ENCODE measurements at regions of chr18 and their contacts with region 1.

Region 1: DNA sequence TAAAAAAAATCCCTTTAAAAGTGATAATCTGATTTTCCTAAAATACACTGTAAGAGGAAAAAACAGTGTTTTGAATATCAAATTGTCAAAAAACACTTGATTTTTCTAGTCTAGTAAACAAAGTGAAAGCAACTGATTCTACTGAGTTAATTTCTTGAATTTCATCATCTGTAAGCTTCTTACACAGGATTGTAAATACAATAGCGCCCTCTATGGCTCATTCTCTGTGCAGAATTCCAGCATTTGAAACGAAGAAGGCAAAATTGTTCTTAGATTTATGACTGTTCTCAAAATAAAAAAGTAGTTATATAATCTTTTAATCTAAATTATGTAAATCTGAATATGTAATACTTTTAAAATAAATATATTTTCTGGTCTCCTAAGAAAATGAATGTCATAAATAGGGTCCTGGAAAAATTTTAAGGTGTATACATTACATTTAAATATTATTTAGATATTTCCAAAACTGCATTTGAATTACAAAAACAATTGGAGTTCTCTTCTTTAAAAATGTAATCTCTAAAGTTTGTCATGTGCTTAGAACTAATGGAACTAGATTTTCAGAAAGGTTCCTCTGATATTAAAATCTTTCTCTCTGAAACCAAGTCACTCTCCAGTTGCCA is 176.9 kb upstream of the MC4R start:
- DNase-seq: no peak
- H3K4me3 ChIP-seq: no peak overlapping the region
- H3K27ac ChIP-seq: no peak overlapping the region
- H3K4me1 ChIP-seq: no peaks in the 10 kb centered on the region
- H3K27me3 ChIP-seq: peaks cover 0 to 6% (median 0%) of the 10 kb centered on the region in 4 donors
- CTCF ChIP-seq: peak; percentile 64 to 73 (median 70)
- EP300 ChIP-seq: no peak
- POLR2A ChIP-seq: no peak

Region 2: DNA sequence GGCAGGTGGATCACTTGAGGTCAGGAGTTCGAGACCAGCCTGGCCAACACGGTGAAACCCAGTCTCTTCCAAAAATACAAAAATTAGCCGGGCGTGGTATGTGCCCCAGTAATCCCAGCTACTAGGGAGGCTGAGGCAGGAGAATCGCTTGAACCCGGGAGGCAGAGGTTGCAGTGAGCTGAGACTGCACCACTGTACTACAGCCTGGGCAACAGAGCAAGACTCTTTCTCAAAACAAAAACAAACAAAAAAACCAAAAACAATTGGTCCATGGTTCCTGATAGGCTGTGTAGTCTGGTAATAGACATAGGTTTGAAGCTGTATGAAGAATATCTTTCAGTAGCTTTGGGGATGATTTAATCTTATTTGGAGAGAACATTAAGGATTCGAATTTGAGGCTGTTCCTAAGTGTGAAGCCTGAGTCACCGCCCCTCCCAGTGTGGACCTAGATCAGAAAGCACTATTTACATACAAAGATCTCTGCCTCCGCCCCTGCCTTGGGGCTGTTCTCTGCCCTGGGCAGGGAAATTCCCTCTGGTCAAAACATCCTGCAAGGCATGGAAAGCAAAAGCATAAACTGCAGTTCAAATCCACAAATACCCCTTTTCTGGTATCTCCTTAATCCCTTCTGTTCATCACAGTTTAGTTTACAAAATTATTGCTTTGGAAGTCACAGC is 702.5 kb before region 1 on chr18:
- intact Hi-C with region 1: loop called (anchors 10 kb)
- DNase-seq: no peak
- H3K4me3 ChIP-seq: no peak overlapping the region
- H3K27ac ChIP-seq: no peak overlapping the region
- H3K4me1 ChIP-seq: peaks cover 0 to 5% (median 0%) of the 10 kb centered on the region in 4 donors
- H3K27me3 ChIP-seq: no peaks in the 10 kb centered on the region
- CTCF ChIP-seq: no peak
- EP300 ChIP-seq: no peak
- POLR2A ChIP-seq: no peak

Region 3: GRCh38 chr18:59988098-59988706 is 561.2 kb before region 1 on chr18:
- intact Hi-C with region 1: loop called (anchors 2 kb)
- DNase-seq: no peak
- H3K4me3 ChIP-seq: no peak overlapping the region
- H3K27ac ChIP-seq: no peak overlapping the region
- H3K4me1 ChIP-seq: no peaks in the 10 kb centered on the region
- H3K27me3 ChIP-seq: no peaks in the 10 kb centered on the region
- CTCF ChIP-seq: peak; percentile 85 to 93 (median 91)
- EP300 ChIP-seq: no peak
- POLR2A ChIP-seq: no peak

Measured in esophagus muscularis mucosa (tissue), 4 donors.